Breast epithelium (tissue), 4 donors: ENCODE measurements at regions of chr1 and their contacts with region 1.

Region 1: GRCh38 chr1:110008971-110009565 is 24.5 kb downstream of the AHCYL1 start:
- DNase-seq: no peak
- H3K4me3 ChIP-seq: no peak overlapping the region
- H3K27ac ChIP-seq: no peak overlapping the region
- H3K4me1 ChIP-seq: peaks cover 0 to 7% of the 10 kb centered on the region in 2 donors
- H3K27me3 ChIP-seq: no peaks in the 10 kb centered on the region
- CTCF ChIP-seq: no peak
- POLR2A ChIP-seq: no peak

Region 2: DNA sequence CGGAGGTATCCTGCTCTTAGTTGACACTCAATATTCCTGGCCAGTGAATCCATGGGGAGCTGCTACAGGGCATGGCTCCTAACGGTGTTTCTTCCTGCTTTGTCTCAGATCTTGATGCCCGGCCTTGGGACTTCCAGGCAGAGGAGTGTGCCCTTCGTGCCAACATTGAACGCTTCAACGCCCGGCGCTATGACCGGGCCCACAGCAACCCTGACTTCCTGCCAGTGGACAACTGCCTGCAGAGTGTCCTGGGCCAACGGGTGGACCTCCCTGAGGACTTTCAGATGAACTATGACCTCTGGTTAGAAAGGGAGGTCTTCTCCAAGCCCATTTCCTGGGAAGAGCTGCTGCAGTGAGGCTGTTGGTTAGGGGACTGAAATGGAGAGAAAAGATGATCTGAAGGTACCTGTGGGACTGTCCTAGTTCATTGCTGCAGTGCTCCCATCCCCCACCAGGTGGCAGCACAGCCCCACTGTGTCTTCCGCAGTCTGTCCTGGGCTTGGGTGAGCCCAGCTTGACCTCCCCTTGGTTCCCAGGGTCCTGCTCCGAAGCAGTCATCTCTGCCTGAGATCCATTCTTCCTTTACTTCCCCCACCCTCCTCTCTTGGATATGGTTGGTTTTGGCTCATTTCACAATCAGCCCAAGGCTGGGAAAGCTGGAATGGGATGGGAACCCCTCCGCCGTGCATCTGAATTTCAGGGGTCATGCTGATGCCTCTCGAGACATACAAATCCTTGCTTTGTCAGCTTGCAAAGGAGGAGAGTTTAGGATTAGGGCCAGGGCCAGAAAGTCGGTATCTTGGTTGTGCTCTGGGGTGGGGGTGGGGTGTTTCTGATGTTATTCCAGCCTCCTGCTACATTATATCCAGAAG is 44.7 kb after region 1 on chr1:
- intact Hi-C with region 1: loop called (anchors 2 kb)
- DNase-seq: peak; percentile 43 to 76
- H3K4me3 ChIP-seq: no peak overlapping the region
- H3K27ac ChIP-seq: no peak overlapping the region
- H3K4me1 ChIP-seq: peaks cover 0 to 13% of the 10 kb centered on the region in 2 donors
- H3K27me3 ChIP-seq: no peaks in the 10 kb centered on the region
- CTCF ChIP-seq: peak; percentile 78 to 86 (median 81)
- POLR2A ChIP-seq: no peak

Region 3: DNA sequence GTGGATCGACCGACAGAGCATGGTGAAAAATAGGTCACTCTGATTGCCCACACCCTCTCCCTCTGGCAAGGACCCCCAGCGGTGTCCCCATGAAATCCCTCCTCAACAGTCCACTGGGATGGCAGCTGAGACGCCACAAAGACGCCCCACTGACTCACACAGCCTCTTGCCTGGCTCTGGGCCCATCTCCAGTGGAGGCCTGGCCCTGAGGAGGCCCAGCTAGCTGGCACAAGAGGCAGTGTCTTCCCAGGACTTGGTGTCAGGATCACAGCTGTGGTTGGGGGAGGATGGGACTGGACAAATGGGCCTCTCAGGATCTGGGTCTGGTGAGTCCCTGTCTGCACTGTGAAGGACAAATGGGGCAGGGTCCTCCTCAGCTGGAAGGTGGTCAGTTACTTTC is 56.8 kb after region 1 on chr1:
- intact Hi-C with region 1: no loop called
- DNase-seq: no peak
- H3K4me3 ChIP-seq: no peak overlapping the region
- H3K27ac ChIP-seq: no peak overlapping the region
- H3K4me1 ChIP-seq: no peaks in the 10 kb centered on the region
- H3K27me3 ChIP-seq: peaks cover 25 to 42% of the 10 kb centered on the region in 2 donors
- CTCF ChIP-seq: no peak
- POLR2A ChIP-seq: no peak